A549 (cell line): ENCODE measurements at regions of chr15 and their contacts with region 1.

Region 1: DNA sequence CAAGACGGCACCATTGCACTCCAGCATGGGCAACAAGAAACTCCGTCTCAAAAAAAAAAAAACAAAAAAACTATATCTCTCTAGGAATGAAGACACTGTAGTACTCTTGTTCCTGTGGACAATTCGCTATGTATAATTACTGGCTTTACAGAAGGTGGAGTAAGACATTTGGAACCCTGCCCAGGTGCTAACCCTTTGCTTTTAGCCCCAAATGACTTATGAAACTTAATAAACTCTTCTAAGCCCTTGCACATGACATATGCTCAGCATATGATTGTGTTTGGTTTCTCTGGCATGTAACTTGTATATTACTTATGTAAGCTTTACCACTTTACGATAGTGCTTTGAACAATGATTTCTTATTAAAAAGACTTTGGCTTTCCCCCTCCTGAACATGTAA is 27.3 kb upstream of the PRTG start:
- DNase-seq: no peak
- ATAC-seq: no peak
- H3K4me3 ChIP-seq: no peak overlapping the region
- H3K27ac ChIP-seq: no peak overlapping the region
- H3K4me1 ChIP-seq: no peaks in the 10 kb centered on the region
- CTCF ChIP-seq: no peak
- EP300 ChIP-seq: no peak
- POLR2A ChIP-seq: no peak
- RAD21 ChIP-seq: no peak

Region 2: DNA sequence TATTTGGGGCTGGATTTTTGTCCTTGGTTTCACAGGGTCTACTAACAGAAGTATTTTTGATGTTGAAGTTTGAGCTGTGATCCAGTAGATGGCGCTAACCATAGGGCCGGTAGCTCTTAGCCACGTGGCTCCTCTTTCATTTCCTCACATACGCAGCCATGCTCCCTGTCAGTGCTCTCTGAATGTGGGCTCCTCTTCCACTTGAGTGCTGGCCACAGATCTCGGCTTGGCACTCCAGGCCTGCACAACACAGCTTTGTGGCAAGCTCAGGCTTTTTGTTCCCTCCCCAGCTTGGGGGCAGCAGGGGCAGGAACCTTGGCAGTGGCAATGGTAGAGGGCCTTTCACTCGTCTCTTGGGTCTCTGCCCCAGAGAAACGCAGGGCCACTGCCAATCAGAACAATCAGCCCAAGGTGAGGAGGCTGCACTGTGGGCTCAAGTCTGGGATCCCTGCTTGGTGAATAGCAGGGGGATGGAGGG is 243.7 kb before region 1 on chr15:
- CTCF ChIA-PET with region 1: no interaction called
- POLR2A ChIA-PET with region 1: no interaction called
- DNase-seq: peak; percentile 26 to 69
- ATAC-seq: peak in 1 of 2 experiments; percentile 85; a peak in 3 of 6 replicates
- H3K4me3 ChIP-seq: no peak overlapping the region
- H3K27ac ChIP-seq: peak overlapping the region in 1 of 2 experiments; percentile 45; a peak in 2 of 6 replicates
- H3K4me1 ChIP-seq: peaks cover 6% of the 10 kb centered on the region; the same call in 2 of the 3 replicates
- CTCF ChIP-seq: peak; percentile 41; the same call in 2 of the 3 replicates
- EP300 ChIP-seq: no peak
- POLR2A ChIP-seq: no peak
- RAD21 ChIP-seq: peak in 1 of 2 experiments; percentile 52; a peak in 2 of 5 replicates

Region 3: GRCh38 chr15:55586808-55587207 is 183.5 kb before region 1 on chr15:
- CTCF ChIA-PET with region 1: no interaction called
- POLR2A ChIA-PET with region 1: no interaction called
- DNase-seq: peak in 1 of 2 experiments; percentile 9
- ATAC-seq: no peak
- H3K4me3 ChIP-seq: peak overlapping the region; percentile 78
- H3K27ac ChIP-seq: peak overlapping the region; percentile 94 to 98; a peak in 3 of 6 replicates
- H3K4me1 ChIP-seq: peaks cover 16% of the 10 kb centered on the region; the same call in 2 of the 3 replicates
- CTCF ChIP-seq: no peak
- EP300 ChIP-seq: no peak
- POLR2A ChIP-seq: no peak
- RAD21 ChIP-seq: no peak

Region 4: GRCh38 chr15:55649054-55649423 is 121.2 kb before region 1 on chr15:
- CTCF ChIA-PET with region 1: no interaction called
- POLR2A ChIA-PET with region 1: no interaction called
- DNase-seq: no peak
- ATAC-seq: peak in 1 of 2 experiments; percentile 69; a peak in 3 of 6 replicates
- H3K4me3 ChIP-seq: no peak overlapping the region
- H3K27ac ChIP-seq: no peak overlapping the region
- H3K4me1 ChIP-seq: no peaks in the 10 kb centered on the region
- CTCF ChIP-seq: no peak
- EP300 ChIP-seq: no peak
- POLR2A ChIP-seq: no peak
- RAD21 ChIP-seq: no peak

Region 5: GRCh38 chr15:55782901-55783300 is 12.6 kb after region 1 on chr15:
- CTCF ChIA-PET with region 1: interaction called, 13 read pairs
- POLR2A ChIA-PET with region 1: no interaction called
- DNase-seq: no peak
- ATAC-seq: no peak
- H3K4me3 ChIP-seq: no peak overlapping the region
- H3K27ac ChIP-seq: no peak overlapping the region
- H3K4me1 ChIP-seq: no peaks in the 10 kb centered on the region
- CTCF ChIP-seq: no peak
- EP300 ChIP-seq: no peak
- POLR2A ChIP-seq: no peak
- RAD21 ChIP-seq: no peak

Region 6: GRCh38 chr15:56199038-56199437 is 428.8 kb after region 1 on chr15:
- CTCF ChIA-PET with region 1: no interaction called
- POLR2A ChIA-PET with region 1: no interaction called
- DNase-seq: no peak
- ATAC-seq: no peak
- H3K4me3 ChIP-seq: no peak overlapping the region
- H3K27ac ChIP-seq: no peak overlapping the region
- H3K4me1 ChIP-seq: peaks cover 16% of the 10 kb centered on the region; the same call in 2 of the 3 replicates
- CTCF ChIP-seq: no peak
- EP300 ChIP-seq: no peak
- POLR2A ChIP-seq: no peak
- RAD21 ChIP-seq: no peak